ENCODE measurements at regions of chr6 and their contacts with region 1.

Region 1: GRCh38 chr6:15327271-15327670 is 81.4 kb downstream of the JARID2 start:
- DNase-seq: peak; percentile 22
- H3K4me3 Mint-ChIP-seq: no peak overlapping the region
- H3K27ac Mint-ChIP-seq: peak overlapping the region; percentile 52
- H3K4me1 Mint-ChIP-seq: peaks cover 79% of the 10 kb centered on the region
- H3K27me3 Mint-ChIP-seq: no peaks in the 10 kb centered on the region

Region 2: GRCh38 chr6:15312500-15312899 is 14.8 kb before region 1 on chr6:
- intact Hi-C with region 1: loop called (anchors 1 kb)
- DNase-seq: no peak
- H3K4me3 Mint-ChIP-seq: peak overlapping the region; percentile 43
- H3K27ac Mint-ChIP-seq: peak overlapping the region; percentile 75
- H3K4me1 Mint-ChIP-seq: peaks cover 93% of the 10 kb centered on the region
- H3K27me3 Mint-ChIP-seq: no peaks in the 10 kb centered on the region

Region 3: DNA sequence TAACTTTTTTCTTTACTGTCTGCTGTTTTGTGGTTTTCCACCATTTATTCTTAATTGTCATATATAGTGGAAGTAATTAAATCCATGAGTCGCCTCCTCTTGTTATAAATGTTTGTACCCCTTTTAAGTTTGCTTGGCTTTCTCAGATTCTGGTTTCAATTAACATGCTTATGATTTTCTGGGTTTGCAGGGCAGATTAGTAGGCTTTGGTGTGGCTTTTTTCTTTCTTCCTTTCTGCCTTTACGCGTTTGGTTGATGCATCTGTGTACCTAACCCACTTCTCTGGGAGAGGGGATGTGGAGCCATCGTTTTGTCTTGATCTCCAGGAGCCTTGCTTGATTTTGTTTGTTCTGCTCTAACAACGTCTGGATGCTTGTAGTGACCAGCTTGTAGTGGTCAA is 19.0 kb after region 1 on chr6:
- intact Hi-C with region 1: loop called (anchors 2 kb)
- DNase-seq: no peak
- H3K4me3 Mint-ChIP-seq: no peak overlapping the region
- H3K27ac Mint-ChIP-seq: no peak overlapping the region
- H3K4me1 Mint-ChIP-seq: peaks cover 76% of the 10 kb centered on the region
- H3K27me3 Mint-ChIP-seq: no peaks in the 10 kb centered on the region